ENCODE measurements at regions of chr6 and their contacts with region 1.

Region 1: DNA sequence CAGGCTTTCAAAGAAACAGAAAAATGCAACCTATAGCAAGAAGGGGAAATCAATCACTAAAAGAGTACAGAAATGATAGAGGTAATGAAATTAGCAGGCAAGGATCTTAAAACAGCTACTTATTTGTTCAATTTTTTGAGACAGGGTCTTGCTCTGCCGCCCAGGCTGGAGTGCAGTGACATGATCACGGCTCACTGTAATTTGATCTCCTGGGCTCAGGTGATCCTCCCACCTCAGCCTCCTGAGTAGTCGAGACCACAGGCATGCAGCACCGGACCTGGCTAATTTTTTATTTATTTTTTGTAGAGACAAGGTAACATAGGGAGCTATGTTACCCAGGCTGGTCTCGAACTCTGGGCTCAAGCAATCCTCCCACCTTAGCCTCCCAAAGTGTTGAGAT is 21.6 kb downstream of the TFB1M start:
- DNase-seq: no peak
- ATAC-seq: no peak
- H3K4me3 ChIP-seq: no peak overlapping the region
- H3K27ac ChIP-seq: no peak overlapping the region
- H3K4me1 ChIP-seq: no peaks in the 10 kb centered on the region
- H3K27me3 ChIP-seq: no peaks in the 10 kb centered on the region
- CTCF ChIP-seq: no peak
- EP300 ChIP-seq: no peak
- POLR2A ChIP-seq: no peak
- RAD21 ChIP-seq: no peak

Region 2: DNA sequence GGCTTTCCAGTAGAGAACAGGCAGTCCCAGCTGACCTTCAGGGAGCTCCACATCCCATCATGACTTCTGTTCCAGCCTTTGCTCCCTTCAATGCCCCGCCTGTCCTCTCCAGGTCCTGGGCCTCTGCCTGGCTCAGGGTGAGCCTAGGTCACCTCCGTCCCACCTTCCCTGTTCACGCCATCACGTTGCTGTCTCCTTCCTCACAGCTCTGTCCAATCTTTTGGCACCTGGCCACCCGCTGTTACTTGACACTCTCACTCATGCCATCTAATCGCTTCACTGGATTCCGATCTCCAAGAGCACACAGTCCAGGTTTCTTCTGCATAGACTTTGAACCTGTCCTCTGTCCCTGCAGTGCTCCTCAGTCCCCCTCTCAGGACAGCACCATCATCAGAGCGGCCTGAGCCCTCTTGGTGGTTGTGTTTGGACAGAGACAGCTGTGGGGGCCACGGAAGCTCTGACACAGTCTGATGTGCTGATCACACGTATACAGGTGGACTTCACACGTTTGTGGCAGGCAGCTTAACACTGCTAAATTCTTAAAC is 332.3 kb before region 1 on chr6:
- CTCF ChIA-PET with region 1: no interaction called
- POLR2A ChIA-PET with region 1: no interaction called
- in situ Hi-C with region 1: no loop called
- intact Hi-C with region 1: no loop called
- DNase-seq: peak; percentile 93
- ATAC-seq: peak; percentile 81
- H3K4me3 ChIP-seq: peak overlapping the region in 1 of 3 experiments; percentile 27; a peak in 2 of 6 replicates
- H3K27ac ChIP-seq: peak overlapping the region; percentile 57
- H3K4me1 ChIP-seq: peaks cover 65% of the 10 kb centered on the region
- H3K27me3 ChIP-seq: no peaks in the 10 kb centered on the region
- CTCF ChIP-seq: no peak
- EP300 ChIP-seq: peak in 1 of 2 experiments; percentile 79; a peak in 2 of 4 replicates
- POLR2A ChIP-seq: 0 out of 4 replicates have a peak, but pooled peaks of 1 of the 2 experiments have one; percentile 14
- RAD21 ChIP-seq: peak; percentile 29; the same call in 1 of the 2 replicates

Region 3: GRCh38 chr6:155670655-155671054 is 377.9 kb after region 1 on chr6:
- CTCF ChIA-PET with region 1: no interaction called
- POLR2A ChIA-PET with region 1: no interaction called
- in situ Hi-C with region 1: no loop called
- intact Hi-C with region 1: no loop called
- DNase-seq: no peak
- ATAC-seq: no peak
- H3K4me3 ChIP-seq: no peak overlapping the region
- H3K27ac ChIP-seq: no peak overlapping the region
- H3K4me1 ChIP-seq: no peaks in the 10 kb centered on the region
- H3K27me3 ChIP-seq: no peaks in the 10 kb centered on the region; a peak in 1 of 5 replicates
- CTCF ChIP-seq: no peak
- EP300 ChIP-seq: no peak
- POLR2A ChIP-seq: no peak
- RAD21 ChIP-seq: no peak

Region 4: GRCh38 chr6:155710704-155711103 is 418.0 kb after region 1 on chr6:
- CTCF ChIA-PET with region 1: no interaction called
- POLR2A ChIA-PET with region 1: no interaction called
- in situ Hi-C with region 1: no loop called
- intact Hi-C with region 1: loop called (anchors 2 kb)
- DNase-seq: no peak
- ATAC-seq: peak; percentile 64
- H3K4me3 ChIP-seq: no peak overlapping the region
- H3K27ac ChIP-seq: no peak overlapping the region
- H3K4me1 ChIP-seq: peaks cover 15% of the 10 kb centered on the region
- H3K27me3 ChIP-seq: peaks cover 0 to 4% of the 10 kb centered on the region in 2 experiments; a peak in 1 of 5 replicates
- CTCF ChIP-seq: 0 out of 2 replicates have a peak, but pooled peaks have one; percentile 5
- EP300 ChIP-seq: no peak
- POLR2A ChIP-seq: no peak
- RAD21 ChIP-seq: no peak

Measured in HepG2 (cell line).